ENCODE measurements at regions of chr20 and their contacts with region 1.

Region 1: DNA sequence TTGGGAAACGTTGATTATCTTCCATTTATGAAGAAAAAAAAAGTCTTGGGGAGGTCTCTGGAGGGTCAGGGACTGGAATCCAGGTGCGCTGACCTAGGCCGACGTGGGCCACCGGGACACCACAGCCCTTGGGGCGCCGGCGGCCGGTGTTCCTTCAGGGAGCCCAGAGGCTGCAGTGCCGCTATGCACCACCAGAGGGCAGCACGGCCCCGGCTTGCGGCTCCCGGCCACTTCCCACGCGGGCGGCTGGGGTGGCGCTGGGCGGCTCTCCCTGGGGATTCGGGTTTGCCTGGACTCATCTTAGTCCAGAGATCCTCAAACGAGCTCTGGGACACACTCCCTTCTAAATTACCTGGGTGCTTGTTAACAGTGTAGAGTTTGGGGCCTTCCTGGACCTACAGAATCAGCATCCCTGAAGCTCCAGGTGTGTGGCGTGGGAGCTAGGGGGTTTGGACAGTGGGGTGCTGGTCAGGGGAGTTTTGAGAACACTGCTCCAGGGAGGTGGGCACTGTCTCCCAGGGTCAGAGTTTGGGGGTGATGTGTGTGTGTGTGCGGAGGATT is 23.0 kb upstream of the GTSF1L start:
- DNase-seq: peak; percentile 87 to 98
- H3K4me3 ChIP-seq: no peak overlapping the region
- H3K4me3 Mint-ChIP-seq: no peak overlapping the region
- H3K27ac Mint-ChIP-seq: no peak overlapping the region
- H3K4me1 ChIP-seq: peaks cover 22% of the 10 kb centered on the region
- H3K4me1 Mint-ChIP-seq: peaks cover 16% of the 10 kb centered on the region
- H3K27me3 ChIP-seq: peaks cover 2% of the 10 kb centered on the region
- H3K27me3 Mint-ChIP-seq: peaks cover 19% of the 10 kb centered on the region
- CTCF ChIP-seq: peak; percentile 100

Region 2: DNA sequence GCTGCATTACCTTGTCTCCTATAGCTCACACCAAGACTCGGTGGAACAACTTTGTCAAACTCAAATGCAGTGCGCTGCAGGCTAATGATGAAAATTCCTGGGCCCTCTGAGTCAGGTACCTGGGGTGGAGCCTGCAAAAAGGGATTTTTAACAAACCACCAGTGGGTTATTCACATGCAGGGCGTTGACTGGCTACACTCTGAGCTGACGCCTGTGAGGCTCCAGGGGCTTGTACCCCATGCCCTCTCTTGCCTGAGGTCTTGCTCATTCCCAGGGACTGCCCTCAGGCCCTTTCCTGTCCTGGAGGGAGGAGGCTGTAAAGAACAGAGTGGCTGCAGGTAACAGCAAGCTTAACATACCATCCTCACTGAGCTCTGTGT is 32.2 kb before region 1 on chr20:
- CTCF ChIA-PET with region 1: no interaction called
- POLR2A ChIA-PET with region 1: no interaction called
- intact Hi-C with region 1: no loop called
- DNase-seq: no peak
- H3K4me3 ChIP-seq: no peak overlapping the region
- H3K4me3 Mint-ChIP-seq: no peak overlapping the region
- H3K27ac Mint-ChIP-seq: no peak overlapping the region
- H3K4me1 ChIP-seq: no peaks in the 10 kb centered on the region
- H3K4me1 Mint-ChIP-seq: no peaks in the 10 kb centered on the region
- H3K27me3 ChIP-seq: no peaks in the 10 kb centered on the region; the same call in 1 of the 2 replicates
- H3K27me3 Mint-ChIP-seq: no peaks in the 10 kb centered on the region
- CTCF ChIP-seq: no peak

Region 3: DNA sequence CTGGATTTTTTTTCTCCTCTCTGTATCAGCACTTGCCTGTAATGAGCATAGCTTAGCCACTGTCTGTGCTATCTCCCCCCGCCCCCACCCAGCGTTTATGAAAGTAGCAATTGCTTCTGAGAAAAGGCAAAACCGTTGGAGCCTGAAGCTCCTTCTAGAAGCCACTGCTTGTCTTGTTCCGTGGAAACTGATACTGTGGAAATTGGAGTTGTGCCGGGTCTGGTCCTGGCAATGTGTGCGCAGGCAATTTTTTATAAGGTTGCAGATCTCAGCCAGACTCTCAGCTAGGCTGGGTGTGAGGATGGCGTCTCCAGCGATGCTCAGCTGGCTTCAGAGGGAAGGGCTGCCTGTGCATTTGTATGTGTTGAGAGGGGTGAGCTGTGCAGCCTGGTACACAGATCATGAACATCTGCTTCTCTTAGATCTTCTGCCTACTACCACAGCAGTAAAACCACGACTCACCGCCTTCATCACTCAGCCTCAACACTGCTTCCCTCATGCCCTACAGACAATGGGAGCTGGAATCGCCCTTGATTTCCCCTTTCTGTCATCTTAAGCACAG is 49.4 kb after region 1 on chr20:
- CTCF ChIA-PET with region 1: no interaction called
- POLR2A ChIA-PET with region 1: no interaction called
- intact Hi-C with region 1: no loop called
- DNase-seq: no peak
- H3K4me3 ChIP-seq: no peak overlapping the region
- H3K4me3 Mint-ChIP-seq: no peak overlapping the region
- H3K27ac Mint-ChIP-seq: no peak overlapping the region
- H3K4me1 ChIP-seq: no peaks in the 10 kb centered on the region
- H3K4me1 Mint-ChIP-seq: no peaks in the 10 kb centered on the region
- H3K27me3 ChIP-seq: peaks cover 3% of the 10 kb centered on the region
- H3K27me3 Mint-ChIP-seq: peaks cover 28% of the 10 kb centered on the region
- CTCF ChIP-seq: no peak

Region 4: GRCh38 chr20:43840382-43841070 is 90.7 kb after region 1 on chr20:
- CTCF ChIA-PET with region 1: interaction called, 3 read pairs
- POLR2A ChIA-PET with region 1: no interaction called
- intact Hi-C with region 1: loop called (anchors 1 kb)
- DNase-seq: peak; percentile 57 to 59
- H3K4me3 ChIP-seq: no peak overlapping the region
- H3K4me3 Mint-ChIP-seq: no peak overlapping the region
- H3K27ac Mint-ChIP-seq: no peak overlapping the region
- H3K4me1 ChIP-seq: no peaks in the 10 kb centered on the region
- H3K4me1 Mint-ChIP-seq: no peaks in the 10 kb centered on the region
- H3K27me3 ChIP-seq: no peaks in the 10 kb centered on the region; the same call in 1 of the 2 replicates
- H3K27me3 Mint-ChIP-seq: peaks cover 31% of the 10 kb centered on the region
- CTCF ChIP-seq: peak; percentile 66 to 86

Measured in Caco-2 (cell line).